Posterior cingulate gyrus (tissue), 11 donors: ENCODE measurements at regions of chr12 and their contacts with region 1.

Region 1: DNA sequence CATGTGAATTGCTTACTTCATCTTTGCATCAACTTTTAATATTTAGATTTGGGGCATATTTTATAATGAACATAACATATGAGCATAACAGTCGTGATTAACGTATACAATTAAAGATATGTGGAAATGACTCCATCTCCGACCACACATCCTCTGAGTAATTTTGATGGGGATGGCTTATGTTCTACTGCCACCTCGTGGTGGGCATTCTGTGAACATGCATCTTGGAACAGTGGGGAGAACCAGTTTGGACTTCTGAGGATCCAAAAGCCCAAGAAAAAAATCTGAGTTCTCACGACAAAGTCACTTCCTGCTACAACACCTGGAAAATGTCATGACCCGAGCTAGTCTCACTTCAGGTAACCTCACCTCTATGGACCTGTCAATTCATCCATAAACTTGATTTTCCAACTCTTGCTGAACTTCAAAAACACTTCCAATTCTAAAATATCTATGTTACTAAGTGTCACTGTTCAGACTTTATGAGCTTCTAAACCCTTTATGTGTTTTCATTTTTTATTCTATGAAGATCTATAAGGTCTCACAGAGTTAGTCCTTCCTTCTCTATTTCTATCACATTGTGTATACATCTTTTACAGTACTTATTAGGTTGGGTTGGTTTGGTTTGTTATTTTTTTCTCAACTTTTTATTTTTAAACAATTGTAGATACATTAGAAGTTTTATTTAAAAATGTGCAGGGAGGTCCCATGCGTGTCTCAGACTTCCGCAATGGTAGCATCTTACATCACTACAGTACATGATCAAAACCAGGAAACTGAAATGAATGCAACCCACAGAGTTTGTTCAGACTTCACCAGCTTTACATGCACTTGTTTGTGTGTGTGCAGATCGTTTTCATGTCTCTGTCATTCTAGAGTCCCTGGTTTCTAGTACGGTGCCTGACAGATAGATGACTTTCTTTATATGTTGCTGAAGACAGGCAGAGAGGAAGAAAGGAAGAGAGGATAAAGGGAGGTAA is 38.2 kb upstream of the STAB2 start:
- DNase-seq: peak in 8 of 10 donors; percentile 48 to 94 (median 75)

Region 2: DNA sequence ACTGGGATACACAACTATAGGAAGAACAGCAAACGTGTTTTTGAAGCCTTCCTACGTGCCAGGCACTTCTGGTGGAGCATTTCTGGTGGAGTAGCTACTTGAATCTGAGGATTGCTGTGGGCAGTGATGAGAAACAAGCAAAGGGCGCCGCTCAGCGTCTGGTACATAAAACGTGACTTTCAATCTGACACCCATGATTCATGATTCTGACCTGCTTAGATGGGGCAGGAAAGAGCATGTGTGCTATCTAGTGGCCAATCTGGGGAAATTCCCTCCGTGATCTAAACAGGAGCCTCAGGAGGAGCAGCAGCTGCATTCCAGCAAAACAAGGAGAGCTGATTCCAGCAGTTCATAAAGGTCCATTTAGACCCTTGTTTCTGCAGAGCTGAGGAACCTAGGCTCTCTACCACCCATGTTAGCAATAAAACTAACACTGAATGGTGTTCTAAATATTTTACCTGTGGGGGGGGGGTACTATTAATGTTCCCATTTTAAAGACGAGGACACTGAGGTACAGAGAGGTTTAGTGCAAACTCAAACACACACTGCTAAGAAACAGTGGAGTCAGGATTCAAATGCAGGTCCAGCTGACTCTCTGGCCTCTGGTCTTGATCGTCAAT is 669.7 kb before region 1 on chr12:
- intact Hi-C with region 1: loop called (anchors 1 kb)
- DNase-seq: peak; percentile 38 to 92 (median 60)

Region 3: GRCh38 chr12:102948941-102949352 is 600.0 kb before region 1 on chr12:
- intact Hi-C with region 1: loop called (anchors 1 kb)
- DNase-seq: peak; percentile 49 to 93 (median 80)

Region 4: DNA sequence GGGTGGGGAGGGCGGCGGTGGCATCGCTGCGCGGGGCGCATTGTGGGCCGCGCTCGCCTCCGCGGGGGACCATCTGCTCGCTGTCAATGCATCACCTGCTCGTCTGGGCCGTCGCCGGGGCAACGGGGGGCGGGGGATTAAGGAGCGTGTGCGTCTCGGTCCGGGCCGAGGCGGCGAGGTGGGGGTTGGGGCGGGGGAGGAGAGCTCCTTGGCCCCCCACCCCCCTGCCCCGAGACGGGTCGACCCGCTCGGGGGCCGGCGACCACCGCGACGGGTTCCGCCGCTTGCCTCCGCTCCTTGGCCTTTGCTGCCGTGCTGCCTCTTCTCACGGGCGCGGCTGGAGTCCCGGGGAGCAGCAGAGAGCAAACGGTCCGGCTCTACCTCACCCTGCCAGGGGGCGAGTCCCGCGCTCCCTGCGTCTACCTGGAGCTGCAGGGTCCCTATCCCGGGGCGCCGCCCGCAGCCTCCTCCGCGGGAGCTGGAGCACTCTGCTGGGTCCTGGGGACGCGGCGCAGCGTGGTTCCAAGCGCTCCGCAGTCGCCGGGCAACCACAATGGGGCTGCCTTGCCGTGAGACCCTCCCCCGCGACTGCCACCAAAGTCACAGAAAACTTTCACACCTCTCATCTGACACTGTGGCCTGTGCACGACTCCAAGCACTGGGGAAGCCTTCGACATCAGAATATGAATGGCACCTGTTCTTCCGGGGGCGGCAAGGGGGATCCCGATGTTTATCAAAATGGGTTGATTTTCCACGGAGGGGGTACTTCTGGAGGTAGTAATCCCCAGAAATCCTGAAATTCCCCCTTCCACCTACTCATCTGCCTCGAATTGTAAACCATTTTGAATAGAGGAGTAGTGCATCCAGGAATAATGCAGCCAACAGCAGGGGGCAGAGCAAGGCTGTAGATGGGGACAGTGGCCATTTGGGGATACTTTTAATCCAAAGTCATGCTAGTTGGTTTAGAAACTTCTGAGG is 53.1 kb before region 1 on chr12 and contains the start of gene C12orf42:
- intact Hi-C with region 1: loop called (anchors 1 kb)
- DNase-seq: peak in 8 of 10 donors; percentile 37 to 93 (median 68)

Region 5: DNA sequence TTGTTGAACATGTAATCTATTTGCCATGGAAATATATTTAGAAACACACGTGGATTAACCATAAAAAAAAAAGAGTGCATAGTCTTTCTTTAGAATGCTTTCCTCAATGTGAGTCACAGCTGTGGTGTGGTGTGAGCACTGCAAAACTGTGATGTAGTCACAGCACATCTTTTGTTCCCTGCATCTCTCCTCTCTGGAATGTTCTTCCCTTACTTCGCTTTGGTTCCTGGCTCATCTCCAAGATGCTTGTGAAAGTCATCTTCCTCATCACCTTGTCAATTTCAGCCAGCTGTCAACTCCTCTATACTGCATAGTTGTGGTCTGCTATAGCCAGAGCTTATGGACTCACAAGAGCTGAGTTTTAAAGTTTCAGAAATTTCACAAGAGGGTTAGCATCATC is 98.4 kb after region 1 on chr12:
- intact Hi-C with region 1: no loop called
- DNase-seq: no peak